A673 (cell line): ENCODE measurements at regions of chr3 and their contacts with region 1.

Region 1: DNA sequence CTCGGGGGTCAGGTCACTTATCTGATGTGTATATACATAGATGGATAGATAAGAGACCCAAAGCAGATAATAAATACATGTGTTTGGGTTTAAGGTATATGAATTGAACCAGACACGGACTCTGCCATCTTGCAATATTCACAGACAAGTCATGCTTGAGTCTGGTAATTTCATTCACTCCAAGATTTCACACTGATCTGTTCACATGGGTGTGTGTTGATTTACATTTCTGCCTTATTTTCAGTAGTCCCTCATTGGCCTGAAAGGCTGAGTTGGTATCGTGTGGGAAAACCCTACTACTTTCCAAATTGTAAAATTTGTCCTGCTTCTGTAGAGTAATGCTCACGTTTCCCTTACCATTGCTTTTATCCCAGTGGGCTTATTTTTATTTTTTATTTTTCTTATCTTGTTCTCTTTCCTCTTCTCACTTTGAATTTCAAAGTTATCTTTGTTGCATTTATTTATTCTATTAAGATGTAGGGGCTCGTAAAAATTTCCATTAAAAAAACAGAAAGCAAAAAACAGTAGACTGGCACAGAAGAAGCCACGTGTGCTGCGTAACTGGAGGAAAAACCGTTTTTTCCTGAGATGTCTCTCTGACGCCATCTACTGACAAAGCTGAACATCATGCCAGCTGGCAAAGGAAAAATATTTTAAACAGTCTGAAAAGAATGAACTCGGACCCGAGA is 10.8 kb upstream of the MFSD1 start:
- DNase-seq: peak; percentile 83
- H3K4me3 ChIP-seq: no peak overlapping the region
- H3K27ac ChIP-seq: no peak overlapping the region
- H3K4me1 ChIP-seq: no peaks in the 10 kb centered on the region
- H3K27me3 ChIP-seq: no peaks in the 10 kb centered on the region
- CTCF ChIP-seq: peak; percentile 88

Region 2: DNA sequence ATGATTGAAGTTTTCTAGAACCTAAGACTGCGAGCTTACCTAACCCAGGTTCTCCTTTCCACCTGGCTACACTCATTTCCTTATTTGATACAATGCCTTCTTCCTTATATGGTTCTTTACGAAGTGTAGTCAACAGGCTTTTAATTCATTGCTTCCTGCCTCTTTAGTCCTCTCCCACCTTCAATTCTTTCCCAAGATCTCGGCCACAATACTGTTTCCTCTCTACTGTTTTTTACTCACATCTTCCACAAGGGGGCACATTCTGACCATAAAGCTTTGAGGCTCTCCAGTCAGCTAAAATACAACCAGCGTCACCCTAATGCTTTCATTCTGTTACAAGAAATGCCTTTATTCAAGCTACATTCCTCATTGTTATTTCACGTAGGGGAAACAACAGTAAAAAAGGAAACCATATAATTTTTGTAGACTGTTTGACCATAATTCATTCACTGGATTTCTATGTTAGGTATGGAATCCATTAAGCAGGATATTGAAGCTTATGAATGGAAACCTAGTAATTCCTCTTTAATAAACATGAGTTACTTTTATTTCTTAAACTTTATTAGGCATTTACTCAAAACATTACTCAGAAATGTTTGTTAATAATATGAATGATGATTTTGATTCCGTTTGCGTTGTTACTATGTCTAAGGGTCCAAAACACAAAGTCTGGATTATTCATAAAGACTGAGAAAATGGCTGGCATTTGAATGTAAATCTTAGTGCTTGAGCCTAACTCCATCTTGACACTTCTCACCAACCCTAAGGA is 1258.3 kb before region 1 on chr3:
- CTCF ChIA-PET with region 1: no interaction called
- POLR2A ChIA-PET with region 1: no interaction called
- intact Hi-C with region 1: loop called (anchors 10 kb)
- DNase-seq: peak; percentile 87
- H3K4me3 ChIP-seq: no peak overlapping the region
- H3K27ac ChIP-seq: no peak overlapping the region
- H3K4me1 ChIP-seq: no peaks in the 10 kb centered on the region
- H3K27me3 ChIP-seq: peaks cover under 1% of the 10 kb centered on the region
- CTCF ChIP-seq: peak; percentile 83

Region 3: DNA sequence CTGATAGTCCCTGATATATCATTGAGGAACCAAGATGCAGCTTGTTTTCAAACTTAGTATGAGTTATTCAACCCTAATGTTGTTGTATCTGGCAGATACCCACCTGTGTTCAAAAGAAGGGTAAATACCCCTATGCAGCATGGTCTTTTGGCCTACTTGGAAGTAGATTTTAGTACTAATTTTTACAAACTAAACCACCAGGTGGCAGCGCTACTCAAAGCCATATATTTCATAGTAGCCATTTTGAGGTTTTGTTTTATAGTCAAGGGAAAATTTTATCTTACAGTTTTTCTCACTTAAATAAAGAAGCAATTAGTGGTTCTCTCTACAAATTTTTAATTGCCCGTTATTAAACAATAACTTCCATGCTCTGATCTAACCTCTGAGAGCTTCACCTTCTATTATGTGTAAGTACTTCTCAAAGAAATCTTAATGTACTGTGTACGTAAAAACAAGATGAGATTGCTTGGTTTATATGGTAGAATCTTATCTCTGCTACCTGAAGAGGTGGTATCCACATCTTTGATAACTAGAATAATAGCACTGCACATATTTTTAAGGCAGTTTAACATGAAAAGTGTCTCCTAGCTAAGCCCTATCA is 251.5 kb before region 1 on chr3:
- CTCF ChIA-PET with region 1: interaction called, 3 read pairs
- POLR2A ChIA-PET with region 1: no interaction called
- intact Hi-C with region 1: loop called (anchors 1 kb)
- DNase-seq: peak; percentile 59
- H3K4me3 ChIP-seq: no peak overlapping the region
- H3K27ac ChIP-seq: no peak overlapping the region
- H3K4me1 ChIP-seq: no peaks in the 10 kb centered on the region
- H3K27me3 ChIP-seq: no peaks in the 10 kb centered on the region
- CTCF ChIP-seq: peak; percentile 68

Region 4: GRCh38 chr3:158727206-158728060 is 63.6 kb before region 1 on chr3:
- CTCF ChIA-PET with region 1: interaction called, 15 read pairs
- POLR2A ChIA-PET with region 1: no interaction called
- intact Hi-C with region 1: loop called (anchors 1 kb)
- DNase-seq: peak; percentile 79
- H3K4me3 ChIP-seq: peak overlapping the region; percentile 14
- H3K27ac ChIP-seq: no peak overlapping the region
- H3K4me1 ChIP-seq: peaks cover 3% of the 10 kb centered on the region
- H3K27me3 ChIP-seq: no peaks in the 10 kb centered on the region
- CTCF ChIP-seq: peak; percentile 91

Region 5: DNA sequence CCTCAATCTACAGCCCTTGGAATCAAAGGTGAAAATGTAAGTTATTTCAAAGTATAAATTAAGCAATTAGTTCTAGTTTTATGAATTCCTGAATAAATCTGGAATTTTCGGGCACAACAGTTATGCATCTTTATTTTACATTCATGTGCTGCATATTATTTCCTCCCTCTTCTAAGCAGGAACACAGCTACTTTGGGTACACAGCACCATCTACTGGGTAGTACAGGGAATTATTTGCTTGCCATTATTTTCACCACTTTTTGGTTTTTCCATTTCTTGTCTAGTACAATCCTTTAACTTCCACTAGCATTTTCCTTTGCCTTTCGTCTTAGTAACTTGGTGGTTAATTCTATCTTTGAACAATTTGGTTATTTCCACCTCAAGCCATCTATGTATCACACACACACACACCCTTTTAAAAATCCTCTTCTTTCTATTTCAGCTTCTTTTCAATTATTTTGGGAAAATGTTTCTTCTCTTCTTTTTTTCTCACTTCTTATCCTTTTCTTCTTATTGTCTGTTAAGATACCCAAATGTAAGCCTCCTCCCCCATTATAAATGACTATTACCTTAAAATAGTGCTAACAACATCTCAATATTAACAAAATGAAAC is 461.8 kb after region 1 on chr3:
- CTCF ChIA-PET with region 1: no interaction called
- POLR2A ChIA-PET with region 1: no interaction called
- intact Hi-C with region 1: loop called (anchors 2 kb)
- DNase-seq: peak; percentile 55
- H3K4me3 ChIP-seq: no peak overlapping the region
- H3K27ac ChIP-seq: no peak overlapping the region
- H3K4me1 ChIP-seq: no peaks in the 10 kb centered on the region
- H3K27me3 ChIP-seq: peaks cover 15% of the 10 kb centered on the region
- CTCF ChIP-seq: peak; percentile 70

Region 6: GRCh38 chr3:159751146-159751545 is 960.1 kb after region 1 on chr3:
- CTCF ChIA-PET with region 1: no interaction called
- POLR2A ChIA-PET with region 1: no interaction called
- intact Hi-C with region 1: no loop called
- DNase-seq: no peak
- H3K4me3 ChIP-seq: no peak overlapping the region
- H3K27ac ChIP-seq: no peak overlapping the region
- H3K4me1 ChIP-seq: no peaks in the 10 kb centered on the region
- H3K27me3 ChIP-seq: peaks cover 5% of the 10 kb centered on the region
- CTCF ChIP-seq: no peak